Activated T-helper 1 cell treated with anti-CD3 and anti-CD28 coated beads, Interleukin-12 subunit alpha, Interleukin-12 subunit beta, Interleukin-2, Interleukin-4 antibody, amounts not matched to agents 30 ng/mL and 10 ng/mL and 1 ng/mL, durations not matched to agents 14 hours and 24 hours and 36 hours (primary cell): ENCODE measurements at regions of chr10 and their contacts with region 1.

Region 1: GRCh38 chr10:79347226-79347893 is at the start of gene PPIF:
- DNase-seq: peak; percentile 95
- H3K4me3 Mint-ChIP-seq: peak within 1 kb of the TSS; percentile 95
- H3K27ac Mint-ChIP-seq: peak within 1 kb of the TSS; percentile 93
- H3K4me1 Mint-ChIP-seq: peaks cover 69% of the 10 kb centered on the region
- H3K27me3 Mint-ChIP-seq: no peaks in the 10 kb centered on the region
- total RNA-seq, gene PPIF: 155 and 157 TPM in 2 replicates

Region 2: DNA sequence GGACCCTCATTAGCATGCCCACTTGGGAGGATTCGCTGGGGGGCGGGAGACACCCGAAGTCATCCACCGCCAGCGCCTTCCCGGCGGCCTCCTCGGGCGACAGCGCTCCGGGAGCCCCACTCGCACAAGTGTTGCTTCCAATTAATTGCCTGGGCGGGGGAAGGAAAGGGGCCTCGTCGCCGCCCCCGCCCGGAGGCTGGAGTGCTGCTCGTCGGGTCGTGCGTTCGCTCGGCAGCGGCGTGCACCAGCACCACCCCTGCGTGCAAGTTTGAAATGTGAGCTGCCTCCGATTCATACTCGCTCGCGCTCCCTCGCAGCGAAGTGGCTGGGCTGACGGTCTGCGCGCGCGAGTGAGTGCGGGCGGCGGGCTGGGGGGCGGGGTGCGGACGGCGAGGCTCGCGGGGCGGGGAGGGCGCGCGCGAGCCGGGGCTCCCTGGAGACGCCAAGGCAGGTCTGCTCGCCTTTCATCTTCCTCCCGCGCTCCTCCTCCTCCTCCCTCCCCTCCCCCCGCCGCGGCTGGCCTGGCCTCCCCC is 104.7 kb before region 1 on chr10:
- intact Hi-C with region 1: loop called (anchors 1 kb)
- DNase-seq: peak; percentile 65
- H3K4me3 Mint-ChIP-seq: peak overlapping the region; percentile 81
- H3K27ac Mint-ChIP-seq: peak overlapping the region; percentile 83
- H3K4me1 Mint-ChIP-seq: peaks cover 71% of the 10 kb centered on the region
- H3K27me3 Mint-ChIP-seq: no peaks in the 10 kb centered on the region

Region 3: GRCh38 chr10:79292891-79293746 is 54.2 kb before region 1 on chr10:
- intact Hi-C with region 1: loop called (anchors 1 kb)
- DNase-seq: no peak
- H3K4me3 Mint-ChIP-seq: no peak overlapping the region
- H3K27ac Mint-ChIP-seq: no peak overlapping the region
- H3K4me1 Mint-ChIP-seq: peaks cover 46% of the 10 kb centered on the region
- H3K27me3 Mint-ChIP-seq: no peaks in the 10 kb centered on the region

Region 4: DNA sequence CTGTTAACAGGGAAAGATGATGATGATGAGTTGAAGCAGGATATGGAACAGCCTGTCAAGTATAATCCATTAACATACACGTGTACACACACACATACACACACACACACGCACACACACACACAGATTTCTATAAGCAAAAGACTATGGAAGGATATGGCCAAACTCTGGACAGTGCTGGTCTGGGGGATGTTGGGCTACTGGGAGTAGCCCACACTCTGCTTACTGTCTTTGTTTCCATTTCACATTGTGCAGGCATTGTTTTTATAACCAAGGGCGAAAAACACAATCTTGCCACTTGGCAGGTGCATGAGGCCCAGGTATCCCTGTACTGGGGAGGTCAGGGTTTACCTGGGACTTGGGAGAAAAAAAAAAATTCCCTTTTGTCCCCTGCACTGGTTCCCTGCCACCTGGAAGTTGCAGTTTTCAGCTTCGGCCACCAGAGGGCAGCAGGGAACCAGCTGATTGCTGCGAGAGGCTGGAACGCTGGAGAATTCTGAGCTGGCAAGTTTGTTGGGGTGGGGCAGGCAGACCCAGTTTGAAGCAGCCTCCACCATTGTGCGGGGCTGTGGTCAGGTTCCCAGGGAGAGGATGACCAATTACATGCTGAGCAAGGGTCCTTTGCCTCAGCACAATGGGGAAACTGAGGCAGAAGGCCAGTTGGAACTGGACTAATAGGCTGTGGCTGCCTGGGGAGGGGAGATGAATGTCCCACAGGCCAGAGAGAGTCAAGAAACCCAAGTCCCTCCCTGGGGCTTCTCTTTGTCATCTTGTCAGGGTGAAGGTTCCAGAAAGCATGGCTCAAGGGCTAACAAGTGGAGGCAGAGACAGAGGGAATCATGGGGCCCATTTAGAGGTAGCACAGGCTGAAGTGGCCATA is 27.2 kb after region 1 on chr10:
- intact Hi-C with region 1: loop called (anchors 1 kb)
- DNase-seq: peak; percentile 55
- H3K4me3 Mint-ChIP-seq: no peak overlapping the region
- H3K27ac Mint-ChIP-seq: no peak overlapping the region
- H3K4me1 Mint-ChIP-seq: peaks cover 9% of the 10 kb centered on the region
- H3K27me3 Mint-ChIP-seq: peaks cover 28% of the 10 kb centered on the region

Region 5: GRCh38 chr10:79463578-79464496 is 116.5 kb after region 1 on chr10:
- intact Hi-C with region 1: loop called (anchors 1 kb)
- DNase-seq: no peak
- H3K4me3 Mint-ChIP-seq: no peak overlapping the region
- H3K27ac Mint-ChIP-seq: no peak overlapping the region
- H3K4me1 Mint-ChIP-seq: no peaks in the 10 kb centered on the region
- H3K27me3 Mint-ChIP-seq: peaks cover 3% of the 10 kb centered on the region